HEK293T (cell line): ENCODE measurements at regions of chr3 and their contacts with region 1.

Region 1: GRCh38 chr3:109023656-109024254 is 70.1 kb upstream of the GUCA1C start:
- DNase-seq: peak; percentile 26

Region 2: DNA sequence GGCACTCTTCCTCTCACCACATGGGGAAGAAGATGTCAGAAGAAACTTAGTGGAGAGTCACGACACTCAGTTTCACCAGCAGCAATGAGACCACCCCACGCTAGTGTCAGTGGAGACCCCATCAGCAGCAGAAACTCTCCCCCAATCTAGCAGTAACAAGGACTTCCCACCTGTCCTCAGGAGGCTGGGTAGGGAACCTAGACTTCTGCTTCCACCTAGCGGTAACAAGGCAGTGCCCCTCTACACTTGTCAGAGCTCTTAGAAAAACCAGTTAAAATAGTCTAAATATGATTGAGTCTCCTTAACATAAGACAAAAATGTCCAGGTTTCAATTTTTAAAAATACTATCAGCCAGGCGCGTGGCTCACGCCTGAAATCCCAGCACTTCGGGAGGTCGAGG is 143.8 kb before region 1 on chr3:
- CTCF ChIA-PET with region 1: no interaction called
- POLR2A ChIA-PET with region 1: no interaction called
- DNase-seq: no peak

Region 3: GRCh38 chr3:109050591-109051167 is 26.9 kb after region 1 on chr3:
- CTCF ChIA-PET with region 1: no interaction called
- POLR2A ChIA-PET with region 1: no interaction called
- DNase-seq: peak; percentile 25

Region 4: GRCh38 chr3:109081746-109082510 is 58.2 kb after region 1 on chr3:
- CTCF ChIA-PET with region 1: interaction called, 13 read pairs
- POLR2A ChIA-PET with region 1: no interaction called
- DNase-seq: peak; percentile 45

Region 5: DNA sequence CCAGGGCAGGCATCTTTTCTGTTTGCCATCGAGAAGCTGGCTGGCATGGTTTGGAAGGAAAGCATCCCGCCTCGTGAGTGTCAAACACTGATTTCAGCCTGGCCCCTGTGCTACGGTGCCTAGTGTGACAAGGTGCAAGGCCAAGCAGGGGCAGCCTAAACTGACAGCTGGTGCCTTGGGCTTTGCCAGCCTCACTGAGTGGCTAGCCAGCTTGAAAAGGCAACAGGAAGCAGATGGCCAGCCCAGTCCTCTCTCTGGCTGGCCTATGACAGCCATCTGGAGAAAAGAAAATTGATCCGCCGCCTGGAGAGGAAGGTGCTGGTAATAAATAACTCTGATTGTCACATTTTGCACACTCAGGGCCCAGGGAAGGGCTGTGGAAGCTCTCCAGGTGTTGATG is 165.0 kb after region 1 on chr3:
- CTCF ChIA-PET with region 1: no interaction called
- POLR2A ChIA-PET with region 1: no interaction called
- DNase-seq: no peak